ENCODE measurements at regions of chr4 and their contacts with region 1.

Region 1: DNA sequence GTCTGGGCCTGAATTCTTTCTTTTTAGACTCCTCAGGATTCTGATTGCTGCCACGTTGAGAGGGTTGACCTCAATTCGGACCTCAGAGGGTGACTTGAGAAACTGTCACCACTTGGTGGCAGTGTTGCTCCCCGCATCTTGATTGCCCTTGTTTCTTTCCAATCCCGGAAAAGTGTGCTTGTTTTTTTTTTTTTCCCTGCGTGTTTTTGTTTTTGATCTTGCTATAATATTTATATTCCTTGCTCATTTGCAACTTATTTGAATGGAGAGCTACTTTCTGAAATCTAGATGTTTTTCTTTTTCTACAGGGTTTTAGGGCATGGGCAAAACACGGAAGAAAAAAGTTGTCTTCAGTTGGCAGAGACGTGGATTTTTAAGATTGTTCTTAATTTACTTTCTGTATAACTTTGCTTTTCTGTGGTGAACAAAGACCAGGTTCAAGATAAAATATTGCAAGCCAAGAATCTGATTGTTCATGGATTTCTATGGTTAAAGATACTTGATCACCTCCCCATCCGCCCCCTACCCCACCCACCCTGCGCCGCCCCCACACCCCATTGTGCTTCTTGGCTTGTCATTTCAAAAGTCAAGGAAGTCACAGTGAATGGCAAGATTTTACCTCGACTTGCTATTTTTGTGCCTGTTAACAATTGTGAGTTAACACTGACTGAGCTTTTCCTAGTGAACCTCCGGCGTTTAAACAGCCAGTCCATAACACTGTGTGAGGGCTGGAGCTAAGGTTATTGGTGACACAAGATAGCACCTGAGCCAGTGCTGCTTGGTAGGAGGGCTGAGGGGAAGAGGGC is 102.1 kb downstream of the PTTG2 start:
- DNase-seq: peak; percentile 68 to 88 (median 84)
- H3K4me3 ChIP-seq: peak overlapping the region; percentile 25
- H3K27ac ChIP-seq: peak overlapping the region in 1 of 2 donors; percentile 47
- H3K4me1 ChIP-seq: peaks cover 3% of the 10 kb centered on the region
- H3K27me3 ChIP-seq: no peaks in the 10 kb centered on the region
- CTCF ChIP-seq: peak; percentile 61 to 78 (median 64)
- EP300 ChIP-seq: no peak
- POLR2A ChIP-seq: no peak

Region 2: DNA sequence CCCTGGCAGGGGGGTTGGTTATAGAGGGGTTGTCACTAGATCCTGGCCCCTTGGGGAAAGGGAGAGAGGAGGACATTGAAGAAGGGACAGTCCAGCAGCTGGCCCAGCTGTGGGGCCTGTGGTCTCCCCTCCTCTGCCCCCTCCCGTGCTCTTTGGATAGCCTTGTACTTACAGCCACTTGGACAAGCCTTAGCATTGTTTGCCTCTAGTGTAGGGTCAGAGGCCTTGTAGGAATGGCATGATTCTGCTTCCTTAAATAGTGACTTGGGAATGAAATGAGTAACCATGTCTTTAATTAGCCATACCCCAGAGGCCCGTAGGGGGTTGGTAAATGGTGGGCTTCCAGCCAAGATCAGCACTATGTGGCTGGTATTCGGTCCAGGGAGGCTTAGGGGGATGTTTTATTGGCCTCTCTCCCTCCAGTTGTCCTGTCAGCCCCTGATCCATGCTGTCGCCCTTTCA is 128.5 kb after region 1 on chr4:
- intact Hi-C with region 1: no loop called
- DNase-seq: peak in 4 of 5 donors; percentile 24 to 44 (median 36)
- H3K4me3 ChIP-seq: no peak overlapping the region
- H3K27ac ChIP-seq: peak overlapping the region in 1 of 2 donors; percentile 32
- H3K4me1 ChIP-seq: peaks cover 5% of the 10 kb centered on the region
- H3K27me3 ChIP-seq: no peaks in the 10 kb centered on the region
- CTCF ChIP-seq: no peak
- EP300 ChIP-seq: no peak
- POLR2A ChIP-seq: no peak

Region 3: DNA sequence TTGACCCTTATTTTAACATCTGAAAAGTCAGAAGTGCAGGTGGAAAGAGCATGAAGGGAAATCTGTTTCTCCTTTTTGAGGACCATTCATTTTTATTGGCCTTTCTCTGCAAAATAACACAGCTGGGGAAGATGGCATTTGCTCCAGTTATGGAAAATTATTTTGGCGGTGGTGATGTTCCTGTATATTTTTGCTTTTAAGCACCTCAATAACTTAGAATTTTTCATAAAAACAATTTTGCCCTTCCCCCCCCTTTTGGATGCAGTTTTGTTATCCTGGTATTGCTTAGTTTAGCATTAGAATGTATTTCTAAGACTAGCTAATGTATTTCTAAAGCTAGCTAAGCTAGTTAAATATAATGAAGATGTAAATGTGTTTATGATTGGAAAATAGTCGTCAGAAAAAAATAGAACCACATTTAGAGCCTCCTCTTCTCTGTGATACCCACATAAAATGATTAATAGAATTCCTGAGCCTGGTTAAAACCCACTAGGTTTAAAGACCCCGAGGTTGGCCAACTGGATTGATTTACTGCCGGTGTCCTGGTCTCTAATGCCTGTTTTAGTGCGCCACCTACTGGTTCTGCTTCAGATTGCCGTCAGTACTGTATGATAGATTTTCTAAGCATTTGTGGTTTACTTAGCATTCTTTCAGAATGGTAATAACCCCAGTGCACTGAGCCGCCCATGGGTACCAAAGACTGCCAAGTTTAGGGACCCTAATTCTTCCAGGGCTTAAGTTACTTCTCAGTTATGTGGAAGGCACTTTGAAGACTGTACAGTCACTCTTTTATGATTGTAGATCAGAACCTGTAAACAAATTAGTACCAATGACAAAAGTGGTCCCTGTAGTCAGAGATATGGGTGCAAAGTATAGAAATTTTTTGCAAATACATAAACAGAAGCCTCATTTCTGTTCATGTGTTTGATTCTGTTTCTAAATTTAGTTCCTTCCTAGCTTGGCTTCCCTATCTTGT is 613.1 kb after region 1 on chr4:
- intact Hi-C with region 1: loop called (anchors 5 to 10 kb)
- DNase-seq: peak; percentile 72 to 87 (median 74)
- H3K4me3 ChIP-seq: no peak overlapping the region
- H3K27ac ChIP-seq: peak overlapping the region in 1 of 2 donors; percentile 84
- H3K4me1 ChIP-seq: peaks cover 35% of the 10 kb centered on the region
- H3K27me3 ChIP-seq: no peaks in the 10 kb centered on the region
- CTCF ChIP-seq: peak; percentile 80 to 91 (median 89)
- EP300 ChIP-seq: no peak
- POLR2A ChIP-seq: no peak

Region 4: GRCh38 chr4:38730830-38731646 is 668.7 kb after region 1 on chr4:
- intact Hi-C with region 1: loop called in 3 of 4 experiments (anchors 5 to 10 kb)
- DNase-seq: peak; percentile 62 to 89 (median 83)
- H3K4me3 ChIP-seq: no peak overlapping the region
- H3K27ac ChIP-seq: no peak overlapping the region
- H3K4me1 ChIP-seq: peaks cover 1% of the 10 kb centered on the region
- H3K27me3 ChIP-seq: no peaks in the 10 kb centered on the region
- CTCF ChIP-seq: peak; percentile 83 to 89 (median 84)
- EP300 ChIP-seq: no peak
- POLR2A ChIP-seq: no peak

Region 5: DNA sequence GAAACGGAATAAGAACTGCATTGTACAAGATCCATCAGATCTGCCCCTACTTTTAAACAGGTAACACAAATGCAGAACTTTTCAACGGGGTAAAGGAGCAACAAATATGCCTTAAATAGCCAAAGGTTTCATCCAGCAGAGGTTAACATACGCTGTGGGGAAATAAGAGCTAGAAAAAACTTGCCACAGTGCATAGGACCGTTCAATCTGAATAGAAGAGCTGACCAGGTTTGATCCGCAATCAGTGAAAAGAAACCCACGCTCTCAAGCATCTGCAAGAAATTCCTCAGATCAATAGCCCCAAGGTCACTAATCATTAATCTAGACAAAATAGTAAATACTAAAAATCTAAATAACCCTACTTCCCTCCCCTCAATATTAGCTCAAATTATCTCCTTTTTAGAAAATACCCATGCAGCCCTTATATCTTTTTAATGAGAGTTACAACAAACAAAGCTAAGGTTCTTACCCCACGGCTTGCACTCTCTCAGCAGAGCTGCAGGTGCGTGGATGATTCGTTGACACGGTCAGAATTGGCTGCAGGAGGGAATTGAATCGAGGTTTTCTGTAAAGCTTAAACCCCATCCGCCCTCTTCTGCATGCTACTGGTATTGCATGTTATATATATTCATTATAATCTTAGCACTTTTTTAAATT is 720.3 kb after region 1 on chr4 and contains the start of gene TLR10:
- intact Hi-C with region 1: loop called in 1 of 4 experiments (anchors 5 kb)
- DNase-seq: peak in 1 of 5 donors; percentile 40
- H3K4me3 ChIP-seq: no peak within 1 kb of the TSS
- H3K27ac ChIP-seq: no peak within 1 kb of the TSS
- H3K4me1 ChIP-seq: no peaks in the 10 kb centered on the region
- H3K27me3 ChIP-seq: no peaks in the 10 kb centered on the region
- CTCF ChIP-seq: peak in 2 of 3 donors; percentile 61 to 64
- EP300 ChIP-seq: no peak
- POLR2A ChIP-seq: no peak
- total RNA-seq, gene TLR10: 0.08 to 1.4 (median 0.23) TPM in 4 of 7 donors, not detected in the others

Region 6: GRCh38 chr4:38867478-38868058 is 805.3 kb after region 1 on chr4 and contains the start of gene FAM114A1:
- intact Hi-C with region 1: loop called in 1 of 4 experiments (anchors 10 kb)
- DNase-seq: peak; percentile 80 to 91 (median 85)
- H3K4me3 ChIP-seq: peak within 1 kb of the TSS; percentile 91
- H3K27ac ChIP-seq: peak within 1 kb of the TSS; percentile 87 to 95
- H3K4me1 ChIP-seq: peaks cover 6% of the 10 kb centered on the region
- H3K27me3 ChIP-seq: no peaks in the 10 kb centered on the region
- CTCF ChIP-seq: no peak
- EP300 ChIP-seq: no peak
- POLR2A ChIP-seq: peak; percentile 31
- total RNA-seq, gene FAM114A1: 70.3 to 99.7 (median 79.3) TPM